Activated T-helper 2 cell treated with anti-CD3 and anti-CD28 coated beads, Interferon-gamma antibody, Interleukin-2, Interleukin-4, amounts not matched to agents 10 μg/mL and 5 μg/mL and 100 μg/mL, durations not matched to agents 14 hours and 24 hours and 36 hours (primary cell): ENCODE measurements at regions of chr15 and their contacts with region 1.

Region 1: GRCh38 chr15:89647191-89647851 is 7.9 kb downstream of the KIF7 start:
- DNase-seq: peak; percentile 51
- H3K4me3 Mint-ChIP-seq: no peak overlapping the region
- H3K27ac Mint-ChIP-seq: no peak overlapping the region
- H3K4me1 Mint-ChIP-seq: no peaks in the 10 kb centered on the region
- H3K27me3 Mint-ChIP-seq: peaks cover 2% of the 10 kb centered on the region

Region 2: GRCh38 chr15:89704411-89704810 is 57.1 kb after region 1 on chr15:
- intact Hi-C with region 1: loop called (anchors 10 kb)
- DNase-seq: no peak
- H3K4me3 Mint-ChIP-seq: no peak overlapping the region
- H3K27ac Mint-ChIP-seq: no peak overlapping the region
- H3K4me1 Mint-ChIP-seq: no peaks in the 10 kb centered on the region
- H3K27me3 Mint-ChIP-seq: peaks cover 50% of the 10 kb centered on the region